Activated CD4-positive, alpha-beta T cell treated with anti-CD3 and anti-CD28 coated beads, Interleukin-2, amount 10 ng/mL, durations not matched to agents 24 days and 14 days (primary cell): ENCODE measurements at regions of chr3 and their contacts with region 1.

Region 1: GRCh38 chr3:58532794-58533220 is 4.2 kb downstream of the ACOX2 start:
- DNase-seq: peak; percentile 94
- H3K4me3 Mint-ChIP-seq: no peak overlapping the region
- H3K27ac Mint-ChIP-seq: peak overlapping the region; percentile 54
- H3K4me1 Mint-ChIP-seq: peaks cover 16% of the 10 kb centered on the region
- H3K27me3 Mint-ChIP-seq: peaks cover 7% of the 10 kb centered on the region

Region 2: GRCh38 chr3:58188173-58188564 is 344.6 kb before region 1 on chr3:
- intact Hi-C with region 1: loop called (anchors 5 kb)
- DNase-seq: no peak
- H3K4me3 Mint-ChIP-seq: no peak overlapping the region
- H3K27ac Mint-ChIP-seq: no peak overlapping the region
- H3K4me1 Mint-ChIP-seq: no peaks in the 10 kb centered on the region
- H3K27me3 Mint-ChIP-seq: peaks cover 2% of the 10 kb centered on the region

Region 3: DNA sequence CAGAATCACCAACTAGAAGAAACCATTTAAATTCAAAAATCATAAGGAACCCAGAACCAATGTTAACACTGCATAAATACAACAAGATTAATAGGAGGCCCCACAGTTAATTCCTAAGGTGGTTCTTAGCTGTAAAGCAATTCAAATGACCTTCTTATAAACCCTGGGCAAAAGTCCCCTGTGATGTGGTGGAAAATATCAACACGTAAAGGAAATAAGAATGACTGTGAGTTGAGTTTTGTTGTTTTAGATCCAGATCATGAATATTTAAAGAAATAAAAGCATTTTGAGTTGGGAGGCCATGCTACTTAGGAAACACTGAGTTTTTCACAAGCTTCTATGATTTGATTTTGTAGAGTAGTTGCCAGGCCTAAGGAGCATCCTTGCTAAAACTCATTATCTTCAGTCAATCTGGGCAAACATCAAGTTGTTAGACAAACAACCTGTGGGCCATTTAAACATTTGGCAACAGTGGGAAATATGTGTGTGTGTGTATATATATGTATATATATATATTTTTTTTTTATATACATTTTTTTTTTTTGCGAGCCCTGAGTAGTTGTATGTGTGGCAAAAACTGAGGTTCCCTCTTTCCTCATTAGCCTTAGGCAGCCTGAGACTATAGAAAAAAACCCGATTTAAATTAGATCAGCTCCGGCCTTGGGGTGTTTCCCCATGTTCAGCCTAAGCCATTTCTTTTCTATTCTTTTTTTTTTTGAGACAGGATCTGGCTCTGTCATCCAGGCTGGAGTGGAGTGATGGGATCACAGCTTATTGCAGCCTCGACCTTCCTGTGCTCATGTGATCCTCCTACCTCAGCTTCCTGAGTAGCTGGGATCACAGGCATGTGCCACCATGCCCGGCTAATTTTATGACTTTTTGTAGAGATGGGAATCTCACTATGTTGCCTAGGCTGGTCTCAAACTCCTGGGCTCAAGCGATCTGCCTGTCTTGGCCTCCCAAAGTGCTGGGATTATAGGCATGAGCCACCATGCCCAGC is 208.1 kb before region 1 on chr3:
- intact Hi-C with region 1: loop called (anchors 1 kb)
- DNase-seq: peak; percentile 73
- H3K4me3 Mint-ChIP-seq: peak overlapping the region; percentile 67
- H3K27ac Mint-ChIP-seq: peak overlapping the region; percentile 90
- H3K4me1 Mint-ChIP-seq: peaks cover 28% of the 10 kb centered on the region
- H3K27me3 Mint-ChIP-seq: no peaks in the 10 kb centered on the region

Region 4: GRCh38 chr3:58433400-58434169 is 99.2 kb before region 1 on chr3 and contains the start of gene PDHB:
- intact Hi-C with region 1: loop called (anchors 1 kb)
- DNase-seq: peak; percentile 97
- H3K4me3 Mint-ChIP-seq: peak within 1 kb of the TSS; percentile 92
- H3K27ac Mint-ChIP-seq: peak within 1 kb of the TSS; percentile 93
- H3K4me1 Mint-ChIP-seq: peaks cover 18% of the 10 kb centered on the region
- H3K27me3 Mint-ChIP-seq: peaks cover 11% of the 10 kb centered on the region
- total RNA-seq, gene PDHB: 68.0 and 69.3 TPM in 2 replicates

Region 5: DNA sequence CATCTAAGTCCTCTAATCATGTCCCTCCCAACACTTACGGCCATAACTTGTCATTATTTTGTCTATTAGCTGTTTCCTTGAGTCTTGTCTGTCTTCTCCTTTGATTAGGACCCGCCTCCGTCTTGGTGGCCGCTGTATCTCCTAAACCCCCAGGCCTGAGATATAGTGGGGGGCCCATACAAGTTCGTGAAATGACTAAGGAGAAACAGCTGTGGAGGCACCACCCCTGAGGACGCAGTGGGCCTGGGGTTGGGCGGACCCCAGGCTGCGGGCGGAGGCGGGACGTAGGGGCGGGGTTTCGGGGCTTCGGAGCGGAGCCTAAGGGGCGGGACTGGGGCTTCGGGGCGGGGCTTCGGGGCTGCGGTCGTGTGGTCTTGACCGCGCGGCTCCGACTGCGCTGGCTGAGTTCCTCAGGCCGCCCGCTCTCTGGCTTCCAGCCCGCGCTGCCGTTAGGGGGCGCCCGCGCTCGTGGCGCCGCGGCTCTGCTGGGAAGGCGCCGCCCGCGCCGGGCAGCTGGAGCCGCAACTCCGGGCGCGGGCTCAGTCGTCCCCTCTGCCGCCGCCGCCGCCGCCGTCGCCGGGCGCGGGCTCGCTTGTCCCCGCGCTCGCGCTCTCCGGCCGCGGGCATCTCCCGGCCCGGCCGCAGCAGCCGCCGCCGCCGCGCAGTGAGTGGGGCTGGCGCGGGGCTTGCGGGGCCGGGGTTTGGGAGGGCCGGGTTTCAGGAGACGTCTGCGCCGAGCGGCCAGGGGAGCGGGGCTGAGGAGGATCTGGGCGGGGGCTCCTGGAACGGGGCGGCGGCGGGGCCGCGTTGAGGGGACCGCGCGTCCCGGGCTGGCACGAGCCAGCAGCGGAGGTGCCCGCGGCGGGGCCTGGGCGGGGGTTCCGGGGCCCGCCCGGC is 41.1 kb before region 1 on chr3 and contains the start of gene KCTD6:
- intact Hi-C with region 1: loop called (anchors 1 kb)
- DNase-seq: peak; percentile 97
- H3K4me3 Mint-ChIP-seq: peak within 1 kb of the TSS; percentile 91
- H3K27ac Mint-ChIP-seq: peak within 1 kb of the TSS; percentile 86
- H3K4me1 Mint-ChIP-seq: peaks cover 24% of the 10 kb centered on the region
- H3K27me3 Mint-ChIP-seq: peaks cover 44% of the 10 kb centered on the region
- total RNA-seq, gene KCTD6: 5.8 and 6.3 TPM in 2 replicates